ENCODE measurements at regions of chr19 and their contacts with region 1.

Region 1: DNA sequence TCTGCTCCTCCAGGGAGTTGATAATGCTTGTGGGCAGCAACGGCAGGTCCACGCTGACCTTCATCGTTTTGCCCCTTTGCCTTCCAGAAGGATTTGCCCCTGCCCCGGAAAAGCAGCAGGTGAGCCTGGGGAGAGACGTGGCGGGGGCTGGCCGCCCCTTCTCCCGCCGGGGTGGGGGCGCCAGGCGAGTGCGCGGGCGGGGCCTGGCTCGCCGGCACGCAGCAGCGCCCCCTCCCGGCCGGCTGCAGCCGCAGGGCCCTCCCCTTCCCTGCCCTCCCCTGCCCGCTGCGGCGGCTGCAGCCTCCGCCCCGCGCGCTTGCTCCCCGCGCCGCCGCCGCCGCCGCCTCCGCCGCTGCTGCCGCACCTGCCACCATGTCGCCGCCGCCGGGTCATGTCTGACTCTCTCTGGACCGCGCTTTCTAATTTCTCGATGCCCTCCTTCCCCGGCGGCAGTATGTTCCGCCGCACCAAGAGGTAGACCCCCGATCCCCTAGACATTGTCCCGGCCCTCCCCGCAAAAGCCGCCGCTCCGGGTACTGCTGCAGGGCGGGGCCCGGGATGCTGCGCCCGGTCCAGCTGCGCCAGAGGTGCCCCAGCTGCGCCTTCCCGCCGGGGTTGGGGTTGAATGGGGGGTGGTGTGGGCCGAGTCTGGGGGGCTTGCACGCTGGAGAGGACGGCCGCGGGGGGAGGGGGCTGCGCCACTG is at the start of gene MAST1:
- DNase-seq: peak; percentile 80
- ATAC-seq: peak; percentile 75
- H3K4me3 ChIP-seq: peak within 1 kb of the TSS; percentile 96
- H3K27ac ChIP-seq: no peak within 1 kb of the TSS
- H3K4me1 ChIP-seq: peaks cover 17% of the 10 kb centered on the region
- H3K27me3 ChIP-seq: peaks cover 11% of the 10 kb centered on the region
- CTCF ChIP-seq: peak; percentile 56
- total RNA-seq, gene MAST1: 7.7 and 11.2 TPM in 2 replicates

Region 2: DNA sequence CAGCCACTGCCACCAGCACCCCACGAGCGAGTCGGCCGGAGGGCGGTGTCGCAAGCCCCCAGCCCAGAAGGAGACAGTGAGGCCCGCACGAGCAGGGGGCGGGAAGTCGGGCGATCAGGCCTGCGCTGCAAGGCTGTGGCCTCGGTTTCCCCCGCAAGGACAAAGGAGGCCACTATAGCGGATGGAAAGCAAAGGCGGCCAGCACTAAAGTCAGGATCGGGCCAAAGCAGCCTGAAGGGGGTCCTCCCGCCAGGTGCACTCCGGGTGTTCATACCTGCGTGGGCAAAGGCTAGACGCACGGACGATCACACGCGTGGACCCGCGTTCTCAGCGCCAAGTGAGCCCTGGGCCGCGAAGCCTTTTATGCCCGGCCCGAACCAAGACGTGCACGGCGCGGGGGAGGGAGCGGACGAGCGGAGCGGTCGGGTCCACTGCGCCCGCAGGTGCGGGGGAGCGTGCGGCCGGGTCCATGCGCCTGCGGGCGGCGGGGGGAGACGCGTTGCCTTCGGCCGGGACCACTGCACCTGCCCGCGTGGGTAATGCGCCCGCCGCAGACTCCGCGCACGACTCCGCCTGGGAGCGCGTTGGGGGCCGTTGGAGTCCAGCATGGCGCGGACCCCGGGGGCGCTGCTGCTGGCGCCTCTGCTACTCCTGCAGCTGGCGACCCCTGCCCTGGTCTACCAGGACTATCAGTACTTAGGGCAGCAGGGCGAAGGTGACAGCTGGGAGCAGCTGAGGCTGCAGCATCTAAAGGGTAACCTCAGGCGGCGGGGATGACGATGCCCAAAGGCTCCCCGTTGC is 36.7 kb before region 1 on chr19 and contains the starts of genes PRDX2 and THSD8:
- CTCF ChIA-PET with region 1: no interaction called
- POLR2A ChIA-PET with region 1: no interaction called
- intact Hi-C with region 1: loop called (anchors 5 kb)
- DNase-seq: peak; percentile 89
- ATAC-seq: peak; percentile 67
- H3K4me3 ChIP-seq: peak within 1 kb of the TSS; percentile 81
- H3K27ac ChIP-seq: no peak within 1 kb of the TSS; the same call in 1 of the 2 replicates
- H3K4me1 ChIP-seq: peaks cover 16% of the 10 kb centered on the region
- H3K27me3 ChIP-seq: no peaks in the 10 kb centered on the region
- CTCF ChIP-seq: no peak
- total RNA-seq, gene PRDX2: 729 and 746 TPM in 2 replicates
- total RNA-seq, gene THSD8: not detected in 2 replicates

Region 3: GRCh38 chr19:13051267-13052165 is 213.2 kb after region 1 on chr19:
- CTCF ChIA-PET with region 1: no interaction called
- POLR2A ChIA-PET with region 1: no interaction called
- intact Hi-C with region 1: no loop called
- DNase-seq: peak; percentile 84
- ATAC-seq: peak; percentile 14
- H3K4me3 ChIP-seq: peak overlapping the region; percentile 43
- H3K27ac ChIP-seq: peak overlapping the region; percentile 99
- H3K4me1 ChIP-seq: peaks cover 65% of the 10 kb centered on the region
- H3K27me3 ChIP-seq: no peaks in the 10 kb centered on the region
- CTCF ChIP-seq: no peak

Region 4: GRCh38 chr19:14198384-14199376 is 1360.3 kb after region 1 on chr19:
- CTCF ChIA-PET with region 1: no interaction called
- POLR2A ChIA-PET with region 1: no interaction called
- intact Hi-C with region 1: no loop called
- DNase-seq: no peak
- ATAC-seq: no peak
- H3K4me3 ChIP-seq: no peak overlapping the region
- H3K27ac ChIP-seq: no peak overlapping the region
- H3K4me1 ChIP-seq: no peaks in the 10 kb centered on the region
- H3K27me3 ChIP-seq: no peaks in the 10 kb centered on the region
- CTCF ChIP-seq: peak; percentile 44; the same call in 1 of the 2 replicates